ENCODE measurements at regions of chr19 and their contacts with region 1.

Region 1: DNA sequence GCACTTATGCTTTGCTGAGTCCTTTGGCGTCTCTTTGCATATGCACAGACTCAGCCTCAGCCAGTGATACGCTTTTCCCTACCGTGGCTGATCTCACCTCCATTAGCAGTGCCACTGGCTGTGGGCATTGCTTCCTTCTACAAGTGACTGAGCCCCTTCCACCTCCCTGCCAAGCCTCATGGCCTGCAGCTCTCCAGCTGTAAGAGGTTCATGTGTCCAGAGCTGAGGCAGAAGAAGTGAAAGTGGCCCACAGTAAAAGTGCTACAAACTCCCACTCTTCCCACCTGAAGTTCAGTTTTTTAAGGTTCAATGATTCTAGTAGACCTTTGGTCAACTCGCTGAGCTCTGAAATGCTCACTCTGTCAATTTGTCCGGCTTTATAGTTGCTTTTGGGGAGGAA is 44.7 kb downstream of the SMARCA4 start:
- DNase-seq: no peak
- ATAC-seq: no peak
- H3K4me3 Mint-ChIP-seq: no peak overlapping the region
- H3K27ac Mint-ChIP-seq: no peak overlapping the region
- H3K4me1 Mint-ChIP-seq: no peaks in the 10 kb centered on the region
- H3K27me3 Mint-ChIP-seq: no peaks in the 10 kb centered on the region
- CTCF ChIP-seq: no peak

Region 2: DNA sequence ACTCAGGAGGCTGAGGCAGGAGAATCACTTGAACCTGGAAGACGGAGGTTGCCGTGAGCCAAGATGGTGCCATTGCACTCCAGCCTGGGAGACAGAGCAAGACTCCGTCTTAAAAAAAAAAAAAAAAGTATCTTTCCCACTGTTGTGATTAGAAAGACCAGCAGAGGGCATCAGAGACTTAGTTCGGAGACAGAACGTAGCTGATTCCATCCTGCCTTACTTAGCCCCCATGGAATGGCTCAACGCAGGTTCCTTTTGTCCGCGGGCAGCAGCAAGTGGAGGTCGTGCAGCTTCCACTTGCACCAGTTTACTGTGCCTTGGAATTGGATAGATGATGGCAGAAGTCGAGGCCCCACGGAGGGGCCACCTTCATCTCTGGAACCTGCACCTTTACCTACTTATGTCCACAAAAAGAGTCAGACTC is 68.8 kb before region 1 on chr19:
- CTCF ChIA-PET with region 1: interaction called, 7 read pairs
- POLR2A ChIA-PET with region 1: no interaction called
- intact Hi-C with region 1: loop called (anchors 5 kb)
- DNase-seq: no peak
- ATAC-seq: peak; percentile 80
- H3K4me3 Mint-ChIP-seq: no peak overlapping the region
- H3K27ac Mint-ChIP-seq: no peak overlapping the region
- H3K4me1 Mint-ChIP-seq: peaks cover 3% of the 10 kb centered on the region
- H3K27me3 Mint-ChIP-seq: no peaks in the 10 kb centered on the region
- CTCF ChIP-seq: no peak

Region 3: GRCh38 chr19:10979951-10980381 is 25.6 kb before region 1 on chr19:
- CTCF ChIA-PET with region 1: no interaction called
- POLR2A ChIA-PET with region 1: no interaction called
- intact Hi-C with region 1: no loop called
- DNase-seq: no peak
- ATAC-seq: peak; percentile 81
- H3K4me3 Mint-ChIP-seq: peak overlapping the region; percentile 33
- H3K27ac Mint-ChIP-seq: no peak overlapping the region
- H3K4me1 Mint-ChIP-seq: peaks cover 26% of the 10 kb centered on the region
- H3K27me3 Mint-ChIP-seq: no peaks in the 10 kb centered on the region
- CTCF ChIP-seq: no peak